ENCODE measurements at regions of chr19 and their contacts with region 1.

Region 1: DNA sequence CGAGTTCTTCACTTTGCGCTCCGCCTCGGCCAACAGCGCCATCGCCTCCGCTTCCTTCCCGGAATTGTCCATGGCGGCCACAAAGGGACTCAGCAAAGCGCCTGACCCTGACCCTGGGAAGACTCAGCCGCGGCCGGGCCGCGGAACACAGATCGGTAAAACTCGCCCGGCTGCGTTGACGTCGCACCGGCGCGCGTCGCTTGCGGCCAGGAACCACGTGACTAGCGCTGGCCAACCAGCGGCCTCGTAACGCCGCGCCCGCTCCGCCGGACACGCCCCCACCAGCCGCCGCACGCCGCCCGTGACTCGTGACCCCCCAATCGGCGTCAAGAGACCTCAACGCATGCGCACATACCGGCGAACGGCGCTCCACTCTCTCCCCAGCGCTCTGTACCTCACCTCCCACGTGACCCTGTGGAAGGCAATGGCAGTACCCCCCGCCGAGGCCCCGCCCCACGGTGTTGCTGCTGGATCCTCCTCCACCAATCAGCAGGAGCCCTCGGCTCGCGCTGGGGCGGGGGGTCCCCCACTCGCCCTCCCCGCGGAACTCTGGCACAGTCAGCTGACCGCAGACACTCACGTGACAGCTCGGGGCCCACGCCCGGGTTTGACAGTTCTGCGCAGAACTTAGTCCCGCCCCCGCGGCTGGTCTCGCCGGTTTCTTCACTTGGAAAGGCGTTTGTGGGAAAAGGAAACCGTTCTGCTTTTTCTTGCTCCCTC is at the start of gene NAPA:
- DNase-seq: peak; percentile 100
- H3K4me3 ChIP-seq: peak within 1 kb of the TSS; percentile 70 to 99 (median 94)
- H3K27ac ChIP-seq: peak within 1 kb of the TSS; percentile 94 to 99 (median 98)
- H3K4me1 ChIP-seq: peaks cover 38 to 52% (median 51%) of the 10 kb centered on the region in 4 donors
- H3K27me3 ChIP-seq: no peaks in the 10 kb centered on the region
- CTCF ChIP-seq: no peak
- EP300 ChIP-seq: no peak
- POLR2A ChIP-seq: peak; percentile 97
- total RNA-seq, gene NAPA: 109 to 164 (median 148) TPM

Region 2: DNA sequence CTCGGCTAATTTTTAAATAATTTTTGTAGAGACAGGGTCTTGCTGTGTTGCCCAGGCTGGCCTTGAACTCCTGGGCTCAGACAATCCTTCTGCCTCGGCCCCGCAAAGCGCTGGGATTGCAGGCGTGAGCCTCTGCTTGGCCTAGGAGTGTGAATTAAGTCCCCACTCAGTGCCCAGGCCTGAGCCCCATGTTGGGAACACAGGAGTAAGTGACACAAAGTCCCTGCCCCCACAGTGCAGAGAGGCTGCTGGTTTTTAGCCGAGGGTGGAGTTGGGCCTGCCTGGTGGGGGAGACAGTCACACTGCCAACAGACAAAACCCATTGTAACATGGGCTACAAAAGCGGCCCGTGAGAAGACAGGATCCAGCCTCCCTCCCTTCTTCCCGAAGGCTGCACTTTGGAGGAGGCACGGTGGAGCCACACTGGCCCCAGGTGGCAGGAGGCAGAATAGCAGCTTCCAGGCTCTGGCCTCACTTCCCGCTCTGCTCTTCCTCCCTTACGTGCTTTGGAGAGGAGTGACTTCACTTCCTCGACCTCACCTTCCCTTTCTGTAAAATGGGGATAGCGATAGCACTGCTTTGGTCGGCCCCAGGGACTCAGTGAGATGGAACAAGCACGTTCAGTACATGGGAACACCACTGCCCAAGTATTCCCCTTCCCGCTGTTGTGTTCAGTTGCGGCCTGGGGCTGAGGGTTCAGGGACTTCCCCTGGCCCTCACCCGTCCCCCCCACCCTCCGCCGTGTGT is 183.0 kb after region 1 on chr19:
- intact Hi-C with region 1: loop called (anchors 2 kb)
- DNase-seq: no peak
- H3K4me3 ChIP-seq: no peak overlapping the region
- H3K27ac ChIP-seq: peak overlapping the region; percentile 72 to 82 (median 80)
- H3K4me1 ChIP-seq: peaks cover 6 to 21% (median 14%) of the 10 kb centered on the region in 4 donors
- H3K27me3 ChIP-seq: no peaks in the 10 kb centered on the region
- CTCF ChIP-seq: peak in 2 of 3 experiments; percentile 97 to 98
- EP300 ChIP-seq: no peak
- POLR2A ChIP-seq: no peak

Measured in esophagus muscularis mucosa (tissue), 4 donors.